MCF 10A (cell line): ENCODE measurements at regions of chr14 and their contacts with region 1.

Region 1: GRCh38 chr14:95460647-95461478 is 55.6 kb downstream of the SYNE3 start:
- DNase-seq: peak; percentile 89
- H3K4me3 Mint-ChIP-seq: no peak overlapping the region
- H3K27ac Mint-ChIP-seq: peak overlapping the region; percentile 2
- H3K4me1 Mint-ChIP-seq: peaks cover 18% of the 10 kb centered on the region
- H3K27me3 Mint-ChIP-seq: no peaks in the 10 kb centered on the region
- CTCF ChIP-seq: no peak

Region 2: DNA sequence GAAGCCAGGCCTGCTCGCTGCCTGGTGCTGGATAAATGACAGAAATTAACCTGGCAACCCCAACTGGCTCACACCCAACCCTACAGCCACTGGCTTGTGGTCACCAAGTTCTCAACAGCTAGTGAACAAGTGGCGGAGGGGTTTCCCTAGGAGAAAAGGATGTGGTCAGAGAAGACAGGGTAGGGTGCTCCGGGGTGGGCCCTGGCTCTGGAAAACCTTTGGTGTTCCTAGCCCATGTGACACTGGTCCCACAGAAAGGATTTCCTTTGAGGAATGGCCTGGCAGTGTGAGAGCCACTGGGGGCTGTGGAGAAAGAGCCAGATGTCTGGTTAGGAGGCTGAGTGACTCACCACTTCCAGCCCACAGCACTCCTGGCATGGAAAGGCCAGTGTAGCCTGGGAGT is 46.8 kb after region 1 on chr14:
- CTCF ChIA-PET with region 1: interaction called, 4 read pairs
- POLR2A ChIA-PET with region 1: interaction called, 4 read pairs
- intact Hi-C with region 1: loop called (anchors 2 kb)
- DNase-seq: peak; percentile 90
- H3K4me3 Mint-ChIP-seq: no peak overlapping the region
- H3K27ac Mint-ChIP-seq: peak overlapping the region; percentile 66
- H3K4me1 Mint-ChIP-seq: peaks cover 26% of the 10 kb centered on the region
- H3K27me3 Mint-ChIP-seq: no peaks in the 10 kb centered on the region
- CTCF ChIP-seq: no peak

Region 3: GRCh38 chr14:95515596-95516552 is 55.0 kb after region 1 on chr14:
- CTCF ChIA-PET with region 1: interaction called, 4 read pairs
- POLR2A ChIA-PET with region 1: interaction called, 10 read pairs
- intact Hi-C with region 1: no loop called
- DNase-seq: peak; percentile 49
- H3K4me3 Mint-ChIP-seq: peak overlapping the region; percentile 71
- H3K27ac Mint-ChIP-seq: no peak overlapping the region
- H3K4me1 Mint-ChIP-seq: peaks cover 34% of the 10 kb centered on the region
- H3K27me3 Mint-ChIP-seq: no peaks in the 10 kb centered on the region
- CTCF ChIP-seq: peak; percentile 36